ENCODE measurements at regions of chr17 and their contacts with region 1.

Region 1: GRCh38 chr17:76304226-76305134 is 3.6 kb downstream of the QRICH2 start:
- DNase-seq: no peak
- ATAC-seq: no peak
- H3K4me3 ChIP-seq: no peak overlapping the region
- H3K4me3 Mint-ChIP-seq: no peak overlapping the region
- H3K27ac ChIP-seq: no peak overlapping the region
- H3K27ac Mint-ChIP-seq: no peak overlapping the region
- H3K4me1 ChIP-seq: no peaks in the 10 kb centered on the region
- H3K4me1 Mint-ChIP-seq: no peaks in the 10 kb centered on the region
- H3K27me3 ChIP-seq: no peaks in the 10 kb centered on the region
- H3K27me3 Mint-ChIP-seq: no peaks in the 10 kb centered on the region
- CTCF ChIP-seq: no peak

Region 2: DNA sequence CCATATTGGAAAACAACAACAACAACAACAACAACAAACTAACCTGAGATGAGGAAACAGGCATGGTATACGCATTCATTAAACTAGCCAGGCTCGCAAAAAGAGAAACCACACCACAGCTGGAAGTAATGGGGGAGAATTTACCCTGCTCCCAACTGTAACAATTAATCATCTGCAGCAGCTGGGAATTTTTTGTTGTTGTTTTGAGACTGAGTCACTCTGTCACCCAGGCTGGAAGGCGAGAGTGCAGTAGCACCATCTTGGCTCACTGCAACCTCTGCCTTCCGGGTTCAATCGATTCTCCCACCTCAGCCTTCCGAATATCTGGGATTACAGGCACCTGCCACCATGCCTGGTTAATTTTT is 32.9 kb after region 1 on chr17:
- intact Hi-C with region 1: no loop called
- DNase-seq: no peak
- ATAC-seq: no peak
- H3K4me3 ChIP-seq: no peak overlapping the region
- H3K4me3 Mint-ChIP-seq: no peak overlapping the region
- H3K27ac ChIP-seq: no peak overlapping the region
- H3K27ac Mint-ChIP-seq: no peak overlapping the region
- H3K4me1 ChIP-seq: no peaks in the 10 kb centered on the region
- H3K4me1 Mint-ChIP-seq: peaks cover 0 to 14% of the 10 kb centered on the region in 2 donors
- H3K27me3 ChIP-seq: no peaks in the 10 kb centered on the region
- H3K27me3 Mint-ChIP-seq: no peaks in the 10 kb centered on the region
- CTCF ChIP-seq: no peak

Region 3: GRCh38 chr17:76370261-76370993 is 65.9 kb after region 1 on chr17:
- intact Hi-C with region 1: no loop called
- DNase-seq: no peak
- ATAC-seq: no peak
- H3K4me3 ChIP-seq: no peak overlapping the region
- H3K4me3 Mint-ChIP-seq: no peak overlapping the region
- H3K27ac ChIP-seq: no peak overlapping the region
- H3K27ac Mint-ChIP-seq: no peak overlapping the region
- H3K4me1 ChIP-seq: no peaks in the 10 kb centered on the region
- H3K4me1 Mint-ChIP-seq: no peaks in the 10 kb centered on the region
- H3K27me3 ChIP-seq: no peaks in the 10 kb centered on the region
- H3K27me3 Mint-ChIP-seq: no peaks in the 10 kb centered on the region
- CTCF ChIP-seq: no peak

Region 4: GRCh38 chr17:76397687-76398487 is 93.4 kb after region 1 on chr17:
- intact Hi-C with region 1: loop called (anchors 1 kb)
- DNase-seq: peak; percentile 85 to 89
- ATAC-seq: peak; percentile 86 to 98 (median 90)
- H3K4me3 ChIP-seq: no peak overlapping the region
- H3K4me3 Mint-ChIP-seq: no peak overlapping the region
- H3K27ac ChIP-seq: no peak overlapping the region
- H3K27ac Mint-ChIP-seq: no peak overlapping the region
- H3K4me1 ChIP-seq: no peaks in the 10 kb centered on the region
- H3K4me1 Mint-ChIP-seq: peaks cover 0 to 4% of the 10 kb centered on the region in 2 donors
- H3K27me3 ChIP-seq: no peaks in the 10 kb centered on the region
- H3K27me3 Mint-ChIP-seq: no peaks in the 10 kb centered on the region
- CTCF ChIP-seq: peak; percentile 92

Region 5: DNA sequence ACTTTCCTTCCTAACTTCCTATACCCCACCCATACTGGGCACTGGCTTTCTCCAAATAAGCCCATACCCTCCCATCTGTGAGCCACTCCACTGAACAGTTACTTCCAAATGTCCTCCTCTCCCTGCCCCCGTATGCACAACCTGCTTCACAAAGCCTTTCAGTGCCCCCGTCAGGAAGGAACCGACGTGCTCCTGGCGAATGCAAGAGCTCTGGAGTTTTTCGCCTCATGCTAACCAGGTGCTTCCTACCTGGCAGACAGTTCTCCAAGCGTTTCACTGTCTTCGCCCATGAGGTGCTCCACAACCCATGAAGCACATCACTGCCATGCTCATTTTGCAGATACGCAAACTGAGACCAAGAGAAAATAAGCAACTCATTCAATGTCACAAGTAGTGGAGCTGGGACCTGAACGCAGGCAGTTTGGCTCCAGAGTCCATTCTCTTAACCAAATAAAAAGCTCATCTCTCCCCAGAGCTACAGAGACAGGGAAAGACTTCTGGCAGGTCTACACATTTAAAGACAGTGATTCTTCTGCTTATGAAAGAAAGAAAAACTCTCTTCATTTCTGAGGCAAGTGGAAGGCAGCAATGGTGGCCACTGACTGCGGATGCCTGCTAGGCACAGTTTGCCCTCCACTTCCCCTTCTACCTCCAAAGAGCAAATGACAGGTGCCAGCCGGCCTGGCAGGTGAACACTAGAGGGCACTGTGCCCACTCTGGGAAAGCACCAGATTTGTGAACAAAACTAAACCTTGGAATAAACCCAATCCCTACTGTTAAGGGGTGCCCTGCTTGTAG is 103.8 kb after region 1 on chr17:
- intact Hi-C with region 1: no loop called
- DNase-seq: peak; percentile 56 to 86
- ATAC-seq: peak; percentile 58 to 80 (median 75)
- H3K4me3 ChIP-seq: no peak overlapping the region
- H3K4me3 Mint-ChIP-seq: no peak overlapping the region
- H3K27ac ChIP-seq: no peak overlapping the region
- H3K27ac Mint-ChIP-seq: no peak overlapping the region
- H3K4me1 ChIP-seq: peaks cover 28% of the 10 kb centered on the region
- H3K4me1 Mint-ChIP-seq: peaks cover 27 to 31% of the 10 kb centered on the region in 2 donors
- H3K27me3 ChIP-seq: no peaks in the 10 kb centered on the region
- H3K27me3 Mint-ChIP-seq: no peaks in the 10 kb centered on the region
- CTCF ChIP-seq: peak; percentile 83

Region 6: DNA sequence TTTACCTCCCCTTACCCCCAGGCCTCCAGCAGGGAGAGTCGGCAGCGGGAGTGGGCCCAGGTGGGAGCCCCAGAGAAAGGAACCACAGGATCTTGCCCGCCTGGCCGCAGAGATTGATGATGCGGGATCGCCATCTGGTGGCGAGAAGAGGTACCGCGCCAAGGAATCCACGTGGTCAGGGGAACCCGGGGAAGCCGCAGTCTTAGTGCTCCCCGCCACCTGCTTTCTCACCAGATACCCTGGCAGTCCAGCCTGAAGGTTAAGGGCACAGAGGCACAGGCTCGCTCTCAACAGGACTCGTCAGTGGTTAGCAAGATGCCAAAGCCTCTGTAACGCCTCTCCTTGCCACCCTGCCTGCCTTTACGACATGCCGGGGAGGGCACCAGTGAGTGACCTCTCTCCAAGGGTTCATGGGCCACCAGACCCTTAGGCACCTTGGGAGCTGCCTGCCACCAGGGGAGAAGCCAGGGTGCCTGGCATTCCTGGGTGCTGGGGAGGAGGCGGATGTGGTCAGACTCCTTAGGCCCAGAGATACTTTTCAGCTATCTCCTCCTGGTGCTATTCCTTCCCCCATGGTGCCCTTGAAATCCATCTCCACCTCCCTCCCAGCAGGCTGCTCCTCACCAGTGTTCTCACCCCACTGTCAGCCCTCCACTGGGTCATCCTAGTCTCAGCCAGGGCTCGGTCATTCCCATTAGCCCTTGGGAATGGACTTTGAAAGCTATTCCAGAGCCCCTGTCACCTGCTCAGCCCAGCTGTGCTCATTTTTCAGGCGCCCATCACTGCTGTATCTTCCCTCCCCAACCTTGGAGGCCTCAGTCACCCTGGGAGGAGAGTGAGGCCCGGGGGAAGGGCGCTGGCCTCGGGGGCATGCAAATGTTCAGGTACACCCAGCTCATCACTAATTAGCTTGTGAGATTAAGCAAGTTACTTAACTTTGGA is 202.2 kb after region 1 on chr17:
- intact Hi-C with region 1: loop called (anchors 5 kb)
- DNase-seq: peak; percentile 95
- ATAC-seq: peak; percentile 90 to 92 (median 91)
- H3K4me3 ChIP-seq: no peak overlapping the region
- H3K4me3 Mint-ChIP-seq: no peak overlapping the region
- H3K27ac ChIP-seq: peak overlapping the region; percentile 56
- H3K27ac Mint-ChIP-seq: peak overlapping the region in 1 of 2 donors; percentile 74
- H3K4me1 ChIP-seq: peaks cover 33% of the 10 kb centered on the region
- H3K4me1 Mint-ChIP-seq: peaks cover 12 to 25% of the 10 kb centered on the region in 2 donors
- H3K27me3 ChIP-seq: no peaks in the 10 kb centered on the region
- H3K27me3 Mint-ChIP-seq: no peaks in the 10 kb centered on the region
- CTCF ChIP-seq: peak; percentile 84